Vagina (tissue), 2 donors: ENCODE measurements at regions of chr6 and their contacts with region 1.

Region 1: GRCh38 chr6:17086469-17086868 is 15.4 kb upstream of the STMND1 start:
- DNase-seq: no peak
- H3K4me3 ChIP-seq: no peak overlapping the region
- H3K27ac ChIP-seq: no peak overlapping the region
- H3K4me1 ChIP-seq: no peaks in the 10 kb centered on the region
- H3K27me3 ChIP-seq: no peaks in the 10 kb centered on the region
- CTCF ChIP-seq: peak; percentile 50 to 73 (median 57)
- POLR2A ChIP-seq: no peak

Region 2: GRCh38 chr6:16914184-16914583 is 172.3 kb before region 1 on chr6:
- intact Hi-C with region 1: loop called (anchors 1 kb)
- DNase-seq: no peak
- H3K4me3 ChIP-seq: no peak overlapping the region
- H3K27ac ChIP-seq: no peak overlapping the region
- H3K4me1 ChIP-seq: no peaks in the 10 kb centered on the region
- H3K27me3 ChIP-seq: no peaks in the 10 kb centered on the region
- CTCF ChIP-seq: no peak
- POLR2A ChIP-seq: no peak

Region 3: DNA sequence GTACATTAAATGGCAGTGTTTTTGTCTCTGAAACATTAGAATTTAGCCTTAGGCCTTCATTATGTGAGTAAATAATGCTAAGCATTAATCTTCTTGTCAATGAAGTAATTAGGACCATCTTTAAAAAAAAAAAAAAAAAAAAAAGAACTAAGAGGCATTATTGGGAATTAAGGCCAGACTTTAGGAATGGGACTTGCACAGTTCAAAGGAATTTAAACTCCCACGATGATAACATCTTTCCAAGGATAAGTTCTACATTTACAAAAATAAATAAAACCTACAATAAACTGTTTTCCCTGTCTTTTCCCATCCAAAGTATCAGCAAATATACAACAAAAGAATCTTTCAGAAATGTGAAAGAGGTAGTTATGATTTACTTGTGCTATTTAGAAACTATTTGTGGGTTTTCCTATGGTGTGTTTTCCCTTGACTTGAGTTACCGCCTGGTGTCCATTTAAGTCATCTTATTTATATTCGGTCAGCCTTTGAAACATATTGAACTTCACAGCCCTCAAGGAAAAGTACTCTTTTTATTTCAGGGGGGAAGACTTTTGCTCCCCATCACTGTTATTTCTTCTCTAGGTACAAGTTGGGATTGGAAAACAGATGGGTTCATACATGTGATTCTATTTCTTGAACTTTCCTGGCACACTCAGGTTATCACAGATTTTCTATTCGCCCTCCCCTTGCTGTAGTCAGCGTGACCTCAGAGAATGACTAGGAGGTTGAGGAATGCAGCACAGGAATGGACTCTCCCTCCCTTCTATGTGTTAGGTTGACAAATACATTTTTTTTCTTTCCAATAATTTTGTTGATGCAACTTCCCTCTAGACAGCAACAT is 29.0 kb after region 1 on chr6:
- intact Hi-C with region 1: no loop called
- DNase-seq: no peak
- H3K4me3 ChIP-seq: no peak overlapping the region
- H3K27ac ChIP-seq: no peak overlapping the region
- H3K4me1 ChIP-seq: peaks cover 13% of the 10 kb centered on the region
- H3K27me3 ChIP-seq: no peaks in the 10 kb centered on the region
- CTCF ChIP-seq: no peak
- POLR2A ChIP-seq: no peak

Region 4: DNA sequence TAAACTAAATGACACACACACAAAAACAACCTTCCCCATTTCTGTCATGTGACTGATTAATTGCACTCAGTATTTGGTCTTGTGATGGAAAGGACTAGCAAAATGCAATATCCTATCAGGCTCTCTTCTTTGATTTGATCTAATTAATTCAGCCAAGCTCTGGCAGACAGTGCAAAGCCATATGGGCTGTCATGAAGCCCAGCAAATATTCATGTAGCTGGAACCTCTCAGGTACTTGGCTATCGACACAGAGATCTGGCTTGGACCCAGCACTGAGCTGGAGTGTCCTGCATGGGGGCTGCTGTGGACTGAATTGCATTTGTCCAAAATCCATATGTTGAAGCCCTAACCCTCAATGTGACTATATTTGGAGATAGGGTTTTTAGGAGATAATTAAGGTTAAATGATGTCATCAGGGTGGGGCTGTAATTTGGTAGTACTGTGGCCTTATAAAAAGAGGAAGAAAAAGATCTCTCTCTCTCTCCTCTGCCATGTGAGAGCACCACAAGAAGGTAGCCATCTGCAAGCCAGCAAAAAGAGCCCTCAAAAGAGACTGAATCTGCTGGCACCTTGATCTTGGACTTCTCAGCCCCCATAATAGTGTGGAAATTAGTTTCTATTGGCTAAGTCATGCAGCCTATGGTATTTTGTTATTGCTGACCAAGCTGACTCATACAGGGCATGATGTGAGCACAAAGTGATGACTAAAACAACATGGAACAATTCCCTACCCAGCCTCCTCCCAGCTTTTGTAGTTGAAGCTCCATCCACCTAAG is 92.5 kb after region 1 on chr6:
- intact Hi-C with region 1: no loop called
- DNase-seq: no peak
- H3K4me3 ChIP-seq: no peak overlapping the region
- H3K27ac ChIP-seq: no peak overlapping the region
- H3K4me1 ChIP-seq: no peaks in the 10 kb centered on the region
- H3K27me3 ChIP-seq: no peaks in the 10 kb centered on the region
- CTCF ChIP-seq: no peak
- POLR2A ChIP-seq: no peak